Activated naive CD4-positive, alpha-beta T cell treated with anti-CD3 and anti-CD28 coated beads for 36 hours (primary cell): ENCODE measurements at regions of chr11 and their contacts with region 1.

Region 1: DNA sequence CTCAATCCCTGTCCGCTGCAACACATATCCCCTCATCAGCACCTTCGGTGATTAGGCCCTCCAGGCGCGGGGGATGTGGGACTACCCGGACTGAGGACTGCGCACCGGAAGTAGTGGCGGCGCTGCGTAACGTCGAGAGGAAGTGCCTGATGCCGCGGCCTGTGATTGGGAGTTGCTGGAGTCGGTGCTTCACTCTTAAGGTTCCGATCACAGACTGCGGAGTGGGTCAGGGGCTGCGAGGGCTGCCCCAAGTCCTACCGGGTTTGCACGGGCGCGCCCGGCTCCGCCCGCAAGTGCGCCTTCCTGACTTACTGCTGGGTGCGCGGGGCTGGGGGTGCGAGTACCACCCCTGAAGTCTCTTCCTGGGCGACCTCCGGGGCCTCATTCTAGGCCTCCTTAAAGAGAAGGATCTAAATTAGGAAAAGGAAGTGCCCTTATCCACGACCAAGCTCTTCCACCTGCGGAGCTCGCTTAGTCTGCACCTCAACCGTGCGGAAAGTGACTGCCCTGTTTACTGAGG is at the start of gene ALKBH3:
- DNase-seq: peak; percentile 94
- H3K4me3 Mint-ChIP-seq: peak within 1 kb of the TSS; percentile 81
- H3K27ac Mint-ChIP-seq: peak within 1 kb of the TSS; percentile 68
- H3K4me1 Mint-ChIP-seq: peaks cover 32% of the 10 kb centered on the region
- H3K27me3 Mint-ChIP-seq: no peaks in the 10 kb centered on the region
- total RNA-seq, gene ALKBH3: 33.5 to 36.6 TPM

Region 2: DNA sequence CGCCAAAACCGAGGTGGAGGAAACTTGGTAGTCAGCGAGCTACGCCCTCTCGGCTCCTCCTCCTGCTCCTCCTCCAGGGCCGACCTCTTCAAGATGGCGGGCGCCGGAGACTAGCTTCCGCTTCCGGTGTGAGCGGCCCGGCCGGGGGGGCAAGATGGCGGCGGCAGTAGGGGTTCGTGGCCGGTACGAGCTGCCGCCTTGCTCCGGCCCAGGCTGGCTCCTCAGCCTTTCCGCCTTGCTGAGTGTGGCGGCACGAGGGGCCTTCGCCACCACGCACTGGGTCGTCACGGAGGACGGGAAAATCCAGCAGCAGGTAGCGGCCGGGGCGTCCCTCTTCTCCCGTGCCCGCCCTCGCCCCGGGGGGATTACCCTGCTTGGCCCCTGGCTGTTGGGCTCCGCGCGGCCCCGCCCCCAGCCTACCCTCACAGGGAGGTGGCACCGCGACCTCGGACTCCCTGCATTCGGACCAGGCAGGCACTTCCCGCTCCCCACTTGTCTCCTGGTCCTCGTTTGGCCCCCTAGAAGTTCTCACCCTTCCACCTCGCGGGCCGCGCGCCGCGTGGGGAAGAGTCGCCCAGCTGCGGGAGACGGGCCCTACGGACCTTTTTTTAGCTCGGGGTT is 521.8 kb before region 1 on chr11 and contains the start of gene TTC17:
- CTCF ChIA-PET with region 1: no interaction called
- intact Hi-C with region 1: loop called (anchors 2 kb)
- DNase-seq: peak; percentile 96
- H3K4me3 Mint-ChIP-seq: peak within 1 kb of the TSS; percentile 95
- H3K27ac Mint-ChIP-seq: peak within 1 kb of the TSS; percentile 94
- H3K4me1 Mint-ChIP-seq: peaks cover 37% of the 10 kb centered on the region
- H3K27me3 Mint-ChIP-seq: no peaks in the 10 kb centered on the region
- total RNA-seq, gene TTC17: 57.1 to 64.3 TPM

Region 3: DNA sequence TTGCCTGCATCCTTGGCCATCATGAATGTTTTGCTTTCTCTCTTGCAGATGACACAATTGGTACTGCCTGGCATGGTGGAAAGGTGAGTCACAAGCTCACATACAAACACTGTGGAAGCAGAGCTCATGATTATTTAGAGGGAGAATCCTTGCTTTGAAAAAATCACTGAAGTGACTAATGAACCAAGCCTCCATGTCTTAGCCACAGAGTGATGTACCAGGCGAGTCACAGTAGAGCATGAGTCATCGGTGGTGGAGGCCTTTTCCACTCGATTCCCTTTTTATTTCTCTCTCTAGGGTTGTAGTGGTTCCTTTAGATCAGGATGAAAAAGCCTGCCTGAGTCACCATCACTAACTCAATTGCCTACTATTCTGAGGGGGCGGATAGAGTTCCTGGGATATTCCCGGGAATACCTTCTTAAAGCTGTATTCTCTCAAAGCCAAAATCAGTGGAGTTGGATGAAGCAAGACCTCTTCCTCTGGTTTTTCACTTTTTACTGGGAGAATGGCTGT is 49.7 kb before region 1 on chr11:
- CTCF ChIA-PET with region 1: interaction called, 3 read pairs
- intact Hi-C with region 1: loop called (anchors 1 kb)
- DNase-seq: peak; percentile 80
- H3K4me3 Mint-ChIP-seq: no peak overlapping the region
- H3K27ac Mint-ChIP-seq: peak overlapping the region; percentile 86
- H3K4me1 Mint-ChIP-seq: peaks cover 15% of the 10 kb centered on the region
- H3K27me3 Mint-ChIP-seq: no peaks in the 10 kb centered on the region

Region 4: GRCh38 chr11:43895601-43896000 is 14.9 kb after region 1 on chr11:
- CTCF ChIA-PET with region 1: interaction called, 19 read pairs
- intact Hi-C with region 1: no loop called
- DNase-seq: no peak
- H3K4me3 Mint-ChIP-seq: no peak overlapping the region
- H3K27ac Mint-ChIP-seq: no peak overlapping the region
- H3K4me1 Mint-ChIP-seq: no peaks in the 10 kb centered on the region
- H3K27me3 Mint-ChIP-seq: no peaks in the 10 kb centered on the region

Region 5: GRCh38 chr11:44065841-44066731 is 185.4 kb after region 1 on chr11 and contains the start of gene ACCS:
- CTCF ChIA-PET with region 1: no interaction called
- intact Hi-C with region 1: loop called (anchors 10 kb)
- DNase-seq: peak; percentile 92
- H3K4me3 Mint-ChIP-seq: peak within 1 kb of the TSS; percentile 88
- H3K27ac Mint-ChIP-seq: peak within 1 kb of the TSS; percentile 93
- H3K4me1 Mint-ChIP-seq: peaks cover 20% of the 10 kb centered on the region
- H3K27me3 Mint-ChIP-seq: no peaks in the 10 kb centered on the region
- total RNA-seq, gene ACCS: 16.2 to 16.6 TPM